T-cell (primary cell): ENCODE measurements at regions of chr17 and their contacts with region 1.

Region 1: GRCh38 chr17:2452216-2452750 is 51.4 kb upstream of the MNT start:
- DNase-seq: no peak
- ATAC-seq: no peak
- H3K4me3 ChIP-seq: no peak overlapping the region
- H3K4me3 Mint-ChIP-seq: no peak overlapping the region
- H3K27ac ChIP-seq: no peak overlapping the region
- H3K27ac Mint-ChIP-seq: no peak overlapping the region
- H3K4me1 ChIP-seq: no peaks in the 10 kb centered on the region
- H3K4me1 Mint-ChIP-seq: peaks cover 4 to 13% (median 12%) of the 10 kb centered on the region in 3 donors
- H3K27me3 ChIP-seq: no peaks in the 10 kb centered on the region
- H3K27me3 Mint-ChIP-seq: no peaks in the 10 kb centered on the region

Region 2: GRCh38 chr17:2058586-2059546 is 393.4 kb before region 1 on chr17:
- CTCF ChIA-PET with region 1: no interaction called
- POLR2A ChIA-PET with region 1: no interaction called
- DNase-seq: peak in 28 of 35 experiments; percentile 30 to 78 (median 50)
- ATAC-seq: no peak
- H3K4me3 ChIP-seq: no peak overlapping the region
- H3K4me3 Mint-ChIP-seq: peak overlapping the region in 1 of 3 donors; percentile 62
- H3K27ac ChIP-seq: no peak overlapping the region
- H3K27ac Mint-ChIP-seq: no peak overlapping the region
- H3K4me1 ChIP-seq: peaks cover 9 to 37% of the 10 kb centered on the region in 2 experiments
- H3K4me1 Mint-ChIP-seq: peaks cover 5 to 17% (median 11%) of the 10 kb centered on the region in 3 donors
- H3K27me3 ChIP-seq: peaks cover 2 to 50% of the 10 kb centered on the region in 2 experiments
- H3K27me3 Mint-ChIP-seq: peaks cover 7 to 13% of the 10 kb centered on the region in 2 donors

Region 3: DNA sequence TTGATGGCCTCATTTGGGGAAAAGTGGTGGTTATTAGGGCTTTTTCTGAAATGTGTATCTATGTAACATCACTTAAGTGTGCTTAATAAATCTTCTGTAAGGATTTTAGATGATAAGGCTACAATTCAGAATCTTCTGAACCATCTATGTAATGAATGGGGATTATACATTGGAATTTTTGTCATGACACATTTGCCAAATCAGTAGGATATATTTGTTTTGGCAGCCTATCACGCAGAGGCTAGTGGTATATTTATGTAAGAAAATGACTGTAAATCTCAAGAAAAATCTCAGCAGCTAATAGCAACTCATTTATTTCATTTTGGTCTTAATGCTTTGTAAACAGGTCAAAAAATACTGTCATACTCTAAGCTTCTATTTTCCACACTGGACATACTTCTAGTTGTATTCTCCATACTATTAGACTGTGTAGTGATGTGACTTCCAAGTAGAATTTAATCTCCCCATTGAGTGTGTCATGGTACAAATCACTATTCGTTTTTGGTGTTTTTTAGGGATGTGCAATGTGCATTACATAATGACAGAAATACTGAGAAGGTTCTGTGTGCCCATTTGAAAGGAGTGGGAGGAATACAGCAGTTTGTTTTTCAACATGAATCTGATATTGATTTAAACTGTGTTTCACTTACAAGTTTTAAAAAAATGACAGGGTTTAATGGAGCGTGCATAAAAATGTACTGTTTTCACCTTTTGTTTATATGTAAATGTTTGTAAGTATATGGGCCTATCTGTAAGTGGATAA is 230.1 kb after region 1 on chr17:
- CTCF ChIA-PET with region 1: no interaction called
- POLR2A ChIA-PET with region 1: interaction called in 1 of 2 experiments, 10 read pairs
- DNase-seq: no peak
- ATAC-seq: no peak
- H3K4me3 ChIP-seq: no peak overlapping the region
- H3K4me3 Mint-ChIP-seq: no peak overlapping the region
- H3K27ac ChIP-seq: no peak overlapping the region
- H3K27ac Mint-ChIP-seq: no peak overlapping the region
- H3K4me1 ChIP-seq: no peaks in the 10 kb centered on the region
- H3K4me1 Mint-ChIP-seq: peaks cover 0 to 2% (median 0%) of the 10 kb centered on the region in 3 donors
- H3K27me3 ChIP-seq: no peaks in the 10 kb centered on the region
- H3K27me3 Mint-ChIP-seq: no peaks in the 10 kb centered on the region